Heart left ventricle (tissue), 16 donors: ENCODE measurements at regions of chr15 and their contacts with region 1.

Region 1: DNA sequence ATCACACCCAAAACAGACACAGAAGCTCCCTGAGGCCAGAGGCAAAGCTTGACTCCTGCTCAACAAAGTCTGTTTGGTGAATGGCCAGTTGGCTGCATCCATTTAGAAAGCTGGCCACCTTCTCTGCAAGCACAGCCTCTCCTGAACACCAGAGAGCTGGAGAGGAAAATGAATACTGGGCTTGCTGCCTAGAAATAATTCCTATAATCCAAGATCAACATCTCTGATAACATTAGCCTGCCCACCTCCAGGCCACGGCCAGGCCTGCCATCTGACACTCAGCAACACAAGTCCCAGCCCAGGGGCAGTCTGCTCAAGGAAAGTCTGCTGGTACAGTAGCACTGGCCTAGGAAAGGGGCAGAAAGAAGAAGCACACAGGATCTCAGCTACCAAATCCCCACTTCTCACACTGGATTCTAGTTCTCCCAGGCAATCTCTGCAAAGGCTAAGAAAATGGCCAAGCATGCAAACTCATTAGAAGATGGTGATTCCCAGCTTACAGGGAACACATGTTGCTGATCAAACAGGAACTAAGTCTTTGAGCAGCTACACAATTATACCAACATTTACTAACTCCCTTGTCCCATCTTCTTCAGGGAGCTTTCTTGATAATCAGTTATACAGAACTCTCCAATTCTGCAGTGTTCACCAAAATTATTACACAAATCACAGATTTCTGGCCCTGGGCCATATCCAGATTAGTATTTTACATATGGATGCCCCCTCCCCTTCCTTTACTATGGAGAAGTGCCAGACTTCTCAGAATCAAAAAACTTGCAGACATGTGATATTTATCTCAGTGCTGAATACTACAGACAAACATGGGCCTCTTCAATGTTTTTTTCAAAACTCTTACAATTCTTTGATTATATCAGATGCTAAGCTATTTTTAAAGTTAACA is 9.9 kb downstream of the TBC1D2B start:
- DNase-seq: no peak
- ATAC-seq: no peak
- H3K4me3 ChIP-seq: no peak overlapping the region
- H3K27ac ChIP-seq: peak overlapping the region in 11 of 12 donors; percentile 2 to 91 (median 64)
- H3K4me1 ChIP-seq: peaks cover 18 to 99% (median 73%) of the 10 kb centered on the region in 12 donors
- H3K27me3 ChIP-seq: no peaks in the 10 kb centered on the region
- CTCF ChIP-seq: no peak
- POLR2A ChIP-seq: no peak

Region 2: DNA sequence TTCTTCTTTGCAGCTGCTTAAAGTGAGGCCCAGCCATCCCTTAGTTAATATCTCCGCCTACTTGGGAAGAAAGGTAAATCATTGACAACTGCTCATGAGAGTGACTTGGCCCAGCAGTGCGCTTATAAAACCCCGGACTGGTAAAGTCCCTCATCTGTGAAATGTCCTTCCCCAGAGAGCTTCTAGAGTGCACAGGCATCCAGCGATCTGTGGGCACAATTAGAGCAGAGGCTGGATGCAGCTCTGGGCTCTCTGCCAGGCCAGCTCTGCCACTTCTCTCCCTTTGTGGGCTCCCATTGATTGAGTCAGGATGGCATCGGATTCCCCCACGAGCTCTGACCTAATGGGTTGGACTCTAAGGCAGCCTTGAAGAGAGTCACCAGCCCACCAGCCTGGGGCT is 215.9 kb before region 1 on chr15:
- intact Hi-C with region 1: no loop called
- DNase-seq: no peak
- ATAC-seq: peak in 1 of 4 donors; percentile 18
- H3K4me3 ChIP-seq: no peak overlapping the region
- H3K27ac ChIP-seq: no peak overlapping the region
- H3K4me1 ChIP-seq: no peaks in the 10 kb centered on the region
- H3K27me3 ChIP-seq: peaks cover 0 to 30% (median 3%) of the 10 kb centered on the region in 9 donors
- CTCF ChIP-seq: no peak
- POLR2A ChIP-seq: no peak

Region 3: DNA sequence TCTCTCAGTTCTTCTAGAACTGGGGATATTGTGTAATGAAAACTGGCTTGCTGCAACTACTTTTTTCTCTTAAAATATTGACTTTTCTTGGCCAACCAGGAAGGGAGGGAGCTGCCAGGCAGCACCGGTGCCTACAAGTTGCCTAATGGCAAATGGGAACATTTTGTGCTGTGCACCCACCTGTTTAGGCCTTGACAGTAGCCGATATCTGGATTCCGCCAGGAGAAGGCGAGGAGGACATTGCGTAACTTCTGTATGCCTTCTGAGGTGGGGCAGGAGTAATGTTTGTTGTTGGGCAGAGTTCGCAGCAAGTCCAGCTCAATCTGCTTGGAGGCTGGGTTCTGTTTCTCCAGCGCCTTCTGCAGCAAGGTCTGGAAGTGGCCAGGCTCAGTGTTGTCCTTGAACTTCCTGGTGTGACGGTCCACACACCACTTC is 54.9 kb before region 1 on chr15:
- intact Hi-C with region 1: no loop called
- DNase-seq: no peak
- ATAC-seq: no peak
- H3K4me3 ChIP-seq: no peak overlapping the region
- H3K27ac ChIP-seq: no peak overlapping the region
- H3K4me1 ChIP-seq: peaks cover 0 to 11% (median 8%) of the 10 kb centered on the region in 12 donors
- H3K27me3 ChIP-seq: no peaks in the 10 kb centered on the region
- CTCF ChIP-seq: no peak
- POLR2A ChIP-seq: no peak

Region 4: GRCh38 chr15:78049691-78050440 is 17.7 kb before region 1 on chr15:
- intact Hi-C with region 1: loop called in 1 of 10 experiments (anchors 2 kb)
- DNase-seq: peak in 1 of 5 donors; percentile 41
- ATAC-seq: peak in 3 of 4 donors; percentile 41 to 46 (median 41)
- H3K4me3 ChIP-seq: no peak overlapping the region
- H3K27ac ChIP-seq: peak overlapping the region in 10 of 12 donors; percentile 19 to 92 (median 59)
- H3K4me1 ChIP-seq: peaks cover 15 to 98% (median 62%) of the 10 kb centered on the region in 12 donors
- H3K27me3 ChIP-seq: no peaks in the 10 kb centered on the region
- CTCF ChIP-seq: no peak
- POLR2A ChIP-seq: no peak

Region 5: DNA sequence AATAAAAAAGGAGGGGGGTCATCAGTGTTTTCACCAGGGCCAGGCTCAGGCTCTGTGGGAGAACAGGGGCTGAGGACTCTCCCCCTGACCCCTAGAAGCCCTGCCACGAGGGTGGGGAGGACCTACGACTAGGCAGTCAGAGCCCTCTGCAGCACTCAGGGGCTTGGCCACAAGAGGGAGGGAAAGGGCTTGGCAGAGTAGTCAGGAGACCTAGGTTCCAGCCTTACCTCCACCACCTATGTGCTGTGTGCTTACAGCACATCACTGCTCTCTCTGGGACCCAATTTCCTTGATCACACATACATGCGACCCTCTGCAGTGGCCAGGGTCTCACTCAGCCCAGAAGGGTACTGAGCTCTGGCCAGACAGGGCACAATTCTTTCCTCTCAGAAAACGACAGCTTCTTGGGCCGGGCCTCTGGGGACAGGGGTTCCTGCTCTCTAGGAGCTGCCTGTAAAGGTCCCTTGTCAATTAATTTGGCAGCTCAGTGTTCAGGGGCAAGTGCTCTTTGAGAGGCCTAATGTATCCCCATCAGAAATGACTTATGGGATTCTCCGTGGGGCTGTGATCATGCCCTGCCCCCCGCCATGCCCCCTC is 248.2 kb after region 1 on chr15:
- intact Hi-C with region 1: no loop called
- DNase-seq: peak in 1 of 5 donors; percentile 12
- ATAC-seq: no peak
- H3K4me3 ChIP-seq: no peak overlapping the region
- H3K27ac ChIP-seq: no peak overlapping the region
- H3K4me1 ChIP-seq: no peaks in the 10 kb centered on the region
- H3K27me3 ChIP-seq: peaks cover 0 to 5% (median 0%) of the 10 kb centered on the region in 9 donors
- CTCF ChIP-seq: no peak
- POLR2A ChIP-seq: no peak

Region 6: GRCh38 chr15:79243723-79244122 is 1176.1 kb after region 1 on chr15:
- intact Hi-C with region 1: no loop called
- DNase-seq: peak in 4 of 5 donors; percentile 59 to 78 (median 68)
- ATAC-seq: peak; percentile 85 to 96 (median 90)
- H3K4me3 ChIP-seq: no peak overlapping the region
- H3K27ac ChIP-seq: peak overlapping the region in 2 of 12 donors; percentile 44 to 64
- H3K4me1 ChIP-seq: peaks cover 0 to 21% (median 2%) of the 10 kb centered on the region in 12 donors
- H3K27me3 ChIP-seq: no peaks in the 10 kb centered on the region
- CTCF ChIP-seq: no peak
- POLR2A ChIP-seq: no peak